H1 (cell line): ENCODE measurements at regions of chr13 and their contacts with region 1.

Region 1: GRCh38 chr13:95191821-95192563 is 109.3 kb downstream of the ABCC4 start:
- DNase-seq: peak; percentile 75 to 97
- H3K4me3 ChIP-seq: no peak overlapping the region
- H3K27ac ChIP-seq: no peak overlapping the region
- H3K4me1 ChIP-seq: no peaks in the 10 kb centered on the region; a peak in 2 of 7 replicates
- H3K27me3 ChIP-seq: no peaks in the 10 kb centered on the region
- CTCF ChIP-seq: peak; percentile 95 to 99 (median 98)
- EP300 ChIP-seq: no peak
- POLR2A ChIP-seq: no peak
- RAD21 ChIP-seq: peak; percentile 95

Region 2: DNA sequence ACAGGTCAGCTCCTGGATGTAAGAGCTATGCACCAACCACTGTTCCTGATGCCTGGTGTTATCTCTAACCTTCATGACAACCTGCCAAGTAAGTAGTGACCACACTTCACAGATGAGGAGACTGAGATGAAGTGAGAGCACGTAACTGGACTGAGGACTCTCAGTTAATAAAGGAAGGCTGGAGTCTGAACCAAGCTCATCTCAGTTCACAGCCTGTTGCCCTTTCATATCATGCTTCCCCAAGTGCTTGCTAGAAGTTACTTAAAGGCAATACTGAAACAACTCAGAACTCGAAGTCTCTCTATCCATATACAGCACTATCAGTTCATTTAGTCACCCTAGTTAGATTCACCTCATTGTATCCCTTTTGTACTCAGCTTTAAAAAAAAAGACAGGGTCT is 10.4 kb before region 1 on chr13:
- CTCF ChIA-PET with region 1: interaction called, 16 read pairs
- POLR2A ChIA-PET with region 1: no interaction called
- DNase-seq: no peak
- H3K4me3 ChIP-seq: no peak overlapping the region
- H3K27ac ChIP-seq: no peak overlapping the region
- H3K4me1 ChIP-seq: no peaks in the 10 kb centered on the region
- H3K27me3 ChIP-seq: no peaks in the 10 kb centered on the region
- CTCF ChIP-seq: no peak
- EP300 ChIP-seq: no peak
- POLR2A ChIP-seq: no peak
- RAD21 ChIP-seq: no peak

Region 3: DNA sequence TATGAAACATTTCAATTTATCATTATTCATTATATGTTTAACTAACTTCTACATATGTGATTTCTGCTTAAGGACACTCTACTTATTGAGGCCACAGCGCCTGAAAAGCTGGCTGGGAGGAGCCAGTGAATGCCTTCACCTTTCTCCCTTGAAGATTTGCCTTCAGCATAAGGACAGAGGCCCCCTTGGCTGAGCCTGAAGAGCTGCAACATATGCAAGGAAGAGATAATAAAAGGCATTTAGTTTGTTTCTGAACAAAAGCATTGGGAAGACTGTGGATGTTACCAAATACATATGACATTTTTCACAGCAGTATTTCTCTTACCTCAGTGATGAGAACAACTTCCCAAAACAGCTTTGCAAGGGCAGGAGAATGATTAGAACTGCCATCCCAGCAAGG is 17.1 kb after region 1 on chr13:
- CTCF ChIA-PET with region 1: interaction called, 11 read pairs
- POLR2A ChIA-PET with region 1: no interaction called
- DNase-seq: no peak
- H3K4me3 ChIP-seq: no peak overlapping the region
- H3K27ac ChIP-seq: no peak overlapping the region
- H3K4me1 ChIP-seq: no peaks in the 10 kb centered on the region; a peak in 1 of 7 replicates
- H3K27me3 ChIP-seq: no peaks in the 10 kb centered on the region
- CTCF ChIP-seq: no peak
- EP300 ChIP-seq: no peak
- POLR2A ChIP-seq: no peak
- RAD21 ChIP-seq: no peak

Region 4: GRCh38 chr13:95301183-95301967 is 109.4 kb after region 1 on chr13 and contains the start of gene ABCC4:
- CTCF ChIA-PET with region 1: interaction called, 141 read pairs
- POLR2A ChIA-PET with region 1: no interaction called
- DNase-seq: peak; percentile 25 to 82
- H3K4me3 ChIP-seq: peak within 1 kb of the TSS; percentile 56 to 92 (median 64)
- H3K27ac ChIP-seq: no peak within 1 kb of the TSS
- H3K4me1 ChIP-seq: peaks cover 0 to 4% (median 0%) of the 10 kb centered on the region in 4 experiments; a peak in 3 of 7 replicates
- H3K27me3 ChIP-seq: peaks cover 4 to 27% (median 20%) of the 10 kb centered on the region in 4 experiments
- CTCF ChIP-seq: no peak
- EP300 ChIP-seq: no peak
- POLR2A ChIP-seq: no peak; a peak in 1 of 3 replicates
- RAD21 ChIP-seq: no peak
- total RNA-seq, gene ABCC4: 14.1 TPM in 2 replicates

Region 5: GRCh38 chr13:95403828-95404522 is 212.0 kb after region 1 on chr13:
- CTCF ChIA-PET with region 1: interaction called, 336 read pairs
- POLR2A ChIA-PET with region 1: interaction called, 14 read pairs
- DNase-seq: peak; percentile 74 to 92
- H3K4me3 ChIP-seq: peak overlapping the region; percentile 47 to 74 (median 68)
- H3K27ac ChIP-seq: no peak overlapping the region
- H3K4me1 ChIP-seq: peaks cover 2 to 3% (median 3%) of the 10 kb centered on the region in 4 experiments; a peak in 3 of 7 replicates
- H3K27me3 ChIP-seq: 0 out of 7 replicates have a peak, but pooled peaks cover 0 to 2% (median 0%) of the 10 kb centered on the region in 4 experiments
- CTCF ChIP-seq: peak; percentile 85 to 94 (median 91)
- EP300 ChIP-seq: no peak
- POLR2A ChIP-seq: peak in 1 of 2 experiments; percentile 55; a peak in 2 of 3 replicates
- RAD21 ChIP-seq: peak; percentile 99 to 100

Region 6: GRCh38 chr13:95447814-95448213 is 255.8 kb after region 1 on chr13:
- CTCF ChIA-PET with region 1: interaction called, 10 read pairs
- POLR2A ChIA-PET with region 1: no interaction called
- DNase-seq: no peak
- H3K4me3 ChIP-seq: no peak overlapping the region
- H3K27ac ChIP-seq: no peak overlapping the region
- H3K4me1 ChIP-seq: peaks cover 4 to 10% (median 6%) of the 10 kb centered on the region in 4 experiments; a peak in 6 of 7 replicates
- H3K27me3 ChIP-seq: no peaks in the 10 kb centered on the region
- CTCF ChIP-seq: no peak
- EP300 ChIP-seq: no peak
- POLR2A ChIP-seq: no peak
- RAD21 ChIP-seq: no peak

Region 7: DNA sequence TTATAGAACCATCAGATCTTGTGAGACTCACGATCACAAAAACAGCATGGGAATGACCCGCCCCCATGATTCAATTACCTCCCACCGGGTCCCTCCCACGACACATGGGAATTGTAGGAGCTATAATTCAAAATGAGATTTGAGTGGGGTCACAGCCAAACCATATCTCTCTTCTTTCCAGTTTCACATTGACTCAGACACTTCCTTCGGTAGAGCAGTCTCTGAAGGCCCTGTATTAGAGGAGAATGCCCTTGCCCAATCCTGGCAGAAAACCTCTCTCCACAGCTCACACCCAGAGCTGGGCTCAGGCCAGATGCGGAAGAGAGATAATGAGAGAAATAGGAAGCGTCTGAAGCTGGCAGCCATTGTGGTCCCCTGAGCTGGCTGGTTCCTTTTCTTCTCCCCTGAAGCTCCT is 288.1 kb after region 1 on chr13:
- CTCF ChIA-PET with region 1: interaction called, 25 read pairs
- POLR2A ChIA-PET with region 1: no interaction called
- DNase-seq: no peak
- H3K4me3 ChIP-seq: no peak overlapping the region
- H3K27ac ChIP-seq: no peak overlapping the region
- H3K4me1 ChIP-seq: no peaks in the 10 kb centered on the region; a peak in 1 of 7 replicates
- H3K27me3 ChIP-seq: peaks cover 0 to 2% (median 0%) of the 10 kb centered on the region in 4 experiments; a peak in 3 of 7 replicates
- CTCF ChIP-seq: no peak
- EP300 ChIP-seq: no peak
- POLR2A ChIP-seq: no peak
- RAD21 ChIP-seq: no peak